ENCODE measurements at regions of chr14 and their contacts with region 1.

Region 1: DNA sequence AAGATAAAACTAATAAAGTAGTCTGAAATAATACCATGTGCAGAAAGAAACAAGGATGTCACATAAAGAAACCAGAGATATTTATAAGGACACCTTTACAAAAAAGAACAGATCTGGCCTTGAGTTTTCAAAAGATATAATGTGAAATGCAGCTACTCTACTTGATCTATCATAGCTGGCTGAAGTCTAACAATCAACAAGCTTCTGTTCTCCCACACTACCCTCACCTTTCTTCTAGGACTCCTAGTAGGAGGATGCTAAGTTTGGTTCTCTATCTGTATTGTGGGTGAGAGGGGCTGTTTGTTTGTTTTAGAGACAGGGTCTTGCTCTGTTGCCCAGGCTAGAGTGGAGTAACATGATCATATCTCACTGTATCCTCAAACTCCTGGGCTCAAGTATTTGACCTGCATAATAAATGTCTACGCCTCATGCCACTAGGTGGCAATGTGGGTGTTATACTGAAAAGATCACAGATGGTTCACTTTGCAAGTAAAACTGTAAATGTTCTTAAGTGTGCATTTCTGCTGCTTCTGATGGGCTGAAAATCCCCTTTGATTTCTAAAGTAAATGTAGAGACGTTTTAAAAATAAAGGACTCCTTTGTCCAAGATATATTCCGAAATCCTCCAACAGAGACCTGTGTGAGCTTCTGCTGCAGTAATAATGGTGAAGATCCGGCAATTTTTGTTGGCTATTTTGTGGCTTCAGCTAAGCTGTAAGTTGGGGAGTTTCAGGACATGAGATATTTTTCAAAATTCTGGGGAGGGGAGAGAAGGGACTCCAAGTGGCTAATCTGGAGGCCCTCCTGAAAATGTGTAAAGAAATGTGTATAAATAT is 269.3 kb downstream of the DAD1 start:
- DNase-seq: peak; percentile 64
- H3K4me3 ChIP-seq: no peak overlapping the region
- H3K27ac ChIP-seq: no peak overlapping the region
- H3K4me1 ChIP-seq: no peaks in the 10 kb centered on the region
- H3K27me3 ChIP-seq: no peaks in the 10 kb centered on the region
- CTCF ChIP-seq: peak; percentile 78

Region 2: GRCh38 chr14:22375321-22375930 is 55.7 kb after region 1 on chr14:
- intact Hi-C with region 1: loop called (anchors 2 kb)
- DNase-seq: peak; percentile 40
- H3K4me3 ChIP-seq: no peak overlapping the region
- H3K27ac ChIP-seq: no peak overlapping the region
- H3K4me1 ChIP-seq: no peaks in the 10 kb centered on the region
- H3K27me3 ChIP-seq: no peaks in the 10 kb centered on the region
- CTCF ChIP-seq: peak; percentile 51

Measured in colonic mucosa (tissue), 4 donors.